ENCODE measurements at regions of chr11 and their contacts with region 1.

Region 1: GRCh38 chr11:47578524-47579460 is at the starts of genes KBTBD4 and NDUFS3:
- DNase-seq: peak; percentile 88
- H3K4me3 ChIP-seq: peak within 1 kb of the TSS; percentile 81 to 97 (median 93)
- H3K27ac ChIP-seq: peak within 1 kb of the TSS; percentile 90
- H3K4me1 ChIP-seq: peaks cover 24% of the 10 kb centered on the region
- H3K27me3 ChIP-seq: no peaks in the 10 kb centered on the region
- CTCF ChIP-seq: no peak
- total RNA-seq, gene KBTBD4: 12.2 to 17.8 TPM
- total RNA-seq, gene NDUFS3: 30.5 to 87.0 TPM

Region 2: GRCh38 chr11:47329987-47330931 is 248.5 kb before region 1 on chr11:
- CTCF ChIA-PET with region 1: no interaction called
- dilution Hi-C with region 1: no loop called
- in situ Hi-C with region 1: no loop called
- intact Hi-C with region 1: no loop called
- DNase-seq: no peak
- H3K4me3 ChIP-seq: no peak overlapping the region
- H3K27ac ChIP-seq: no peak overlapping the region
- H3K4me1 ChIP-seq: no peaks in the 10 kb centered on the region
- H3K27me3 ChIP-seq: no peaks in the 10 kb centered on the region
- CTCF ChIP-seq: peak in 1 of 2 donors; percentile 3

Region 3: DNA sequence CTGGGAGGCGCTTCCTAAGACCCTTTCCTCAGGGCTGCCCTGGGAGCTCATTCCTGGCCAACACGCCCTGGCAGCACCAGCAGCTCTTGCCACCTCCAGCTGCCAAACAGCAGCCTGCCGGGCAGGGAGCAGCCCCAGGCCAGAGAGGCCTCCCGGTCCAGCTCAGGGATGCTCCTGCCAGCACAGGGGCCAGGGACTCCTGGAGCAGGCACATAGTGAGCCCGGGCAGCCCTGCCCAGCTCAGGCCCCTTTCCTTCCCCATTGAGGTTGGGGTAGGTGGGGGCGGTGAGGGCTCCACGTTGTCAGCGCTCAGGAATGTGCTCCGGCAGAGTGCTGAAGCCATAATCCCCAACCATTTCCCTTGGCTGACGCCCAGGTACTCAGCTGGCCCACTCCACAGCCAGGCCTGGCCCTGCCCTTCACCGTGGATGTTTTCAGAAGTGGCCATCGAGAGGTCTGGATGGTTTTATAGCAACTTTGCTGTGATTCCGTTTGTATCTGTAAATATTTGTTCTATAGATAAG is 162.8 kb before region 1 on chr11:
- CTCF ChIA-PET with region 1: no interaction called
- dilution Hi-C with region 1: no loop called
- in situ Hi-C with region 1: no loop called
- intact Hi-C with region 1: no loop called
- DNase-seq: peak; percentile 87
- H3K4me3 ChIP-seq: no peak overlapping the region
- H3K27ac ChIP-seq: peak overlapping the region; percentile 33
- H3K4me1 ChIP-seq: peaks cover 37% of the 10 kb centered on the region
- H3K27me3 ChIP-seq: no peaks in the 10 kb centered on the region
- CTCF ChIP-seq: no peak

Region 4: GRCh38 chr11:47616726-47617416 is 38.1 kb after region 1 on chr11:
- CTCF ChIA-PET with region 1: no interaction called
- dilution Hi-C with region 1: loop called (anchors 5 kb)
- in situ Hi-C with region 1: no loop called
- intact Hi-C with region 1: no loop called
- DNase-seq: peak; percentile 28
- H3K4me3 ChIP-seq: no peak overlapping the region
- H3K27ac ChIP-seq: no peak overlapping the region
- H3K4me1 ChIP-seq: no peaks in the 10 kb centered on the region
- H3K27me3 ChIP-seq: no peaks in the 10 kb centered on the region
- CTCF ChIP-seq: peak; percentile 43 to 74

Region 5: DNA sequence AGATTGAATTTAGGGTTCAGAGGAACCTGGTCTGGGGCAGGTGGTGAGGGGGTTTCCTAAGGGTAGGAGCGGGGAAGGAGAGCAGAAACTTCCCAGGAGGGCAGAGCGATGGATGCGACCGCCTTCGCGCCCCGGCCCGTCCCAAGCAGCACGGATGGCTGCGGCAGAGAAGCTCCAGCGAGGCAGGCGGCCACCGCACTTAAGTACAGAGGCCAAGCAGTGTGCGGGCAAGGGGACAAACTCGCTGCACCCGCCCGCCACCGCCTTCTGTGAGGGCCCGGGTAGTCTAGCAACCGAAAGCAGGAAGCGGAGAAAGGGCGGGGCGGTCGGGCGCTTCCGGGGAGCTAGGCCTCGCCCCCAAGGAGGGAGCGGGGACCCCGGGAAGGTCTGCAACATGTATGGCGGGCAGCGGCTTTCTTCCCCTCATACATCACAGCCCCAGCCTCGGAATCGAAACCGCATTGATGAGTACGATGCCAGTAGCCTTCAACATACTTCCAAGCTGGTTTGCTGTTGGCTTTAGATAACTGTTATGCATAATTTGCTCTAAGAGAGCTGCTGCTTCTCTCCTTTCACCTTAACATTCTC is 136.4 kb after region 1 on chr11 and contains the start of gene AGBL2:
- CTCF ChIA-PET with region 1: no interaction called
- dilution Hi-C with region 1: no loop called
- in situ Hi-C with region 1: no loop called
- intact Hi-C with region 1: loop called (anchors 1 kb)
- DNase-seq: peak; percentile 56
- H3K4me3 ChIP-seq: peak within 1 kb of the TSS; percentile 51 to 72 (median 62)
- H3K27ac ChIP-seq: peak within 1 kb of the TSS; percentile 71
- H3K4me1 ChIP-seq: peaks cover 12% of the 10 kb centered on the region
- H3K27me3 ChIP-seq: no peaks in the 10 kb centered on the region
- CTCF ChIP-seq: no peak
- total RNA-seq, gene AGBL2: 1.7 to 2.3 TPM

Measured in mammary epithelial cell (primary cell).